ENCODE measurements at regions of chr17 and their contacts with region 1.

Region 1: GRCh38 chr17:43945074-43945829 is 3.0 kb upstream of the PPY start:
- DNase-seq: no peak
- ATAC-seq: no peak
- H3K4me3 ChIP-seq: no peak overlapping the region
- H3K4me3 Mint-ChIP-seq: no peak overlapping the region
- H3K27ac ChIP-seq: no peak overlapping the region
- H3K27ac Mint-ChIP-seq: no peak overlapping the region
- H3K4me1 ChIP-seq: no peaks in the 10 kb centered on the region
- H3K4me1 Mint-ChIP-seq: no peaks in the 10 kb centered on the region
- H3K27me3 ChIP-seq: peaks cover 0 to 22% of the 10 kb centered on the region in 2 experiments
- H3K27me3 Mint-ChIP-seq: peaks cover 4 to 21% of the 10 kb centered on the region in 2 donors

Region 2: DNA sequence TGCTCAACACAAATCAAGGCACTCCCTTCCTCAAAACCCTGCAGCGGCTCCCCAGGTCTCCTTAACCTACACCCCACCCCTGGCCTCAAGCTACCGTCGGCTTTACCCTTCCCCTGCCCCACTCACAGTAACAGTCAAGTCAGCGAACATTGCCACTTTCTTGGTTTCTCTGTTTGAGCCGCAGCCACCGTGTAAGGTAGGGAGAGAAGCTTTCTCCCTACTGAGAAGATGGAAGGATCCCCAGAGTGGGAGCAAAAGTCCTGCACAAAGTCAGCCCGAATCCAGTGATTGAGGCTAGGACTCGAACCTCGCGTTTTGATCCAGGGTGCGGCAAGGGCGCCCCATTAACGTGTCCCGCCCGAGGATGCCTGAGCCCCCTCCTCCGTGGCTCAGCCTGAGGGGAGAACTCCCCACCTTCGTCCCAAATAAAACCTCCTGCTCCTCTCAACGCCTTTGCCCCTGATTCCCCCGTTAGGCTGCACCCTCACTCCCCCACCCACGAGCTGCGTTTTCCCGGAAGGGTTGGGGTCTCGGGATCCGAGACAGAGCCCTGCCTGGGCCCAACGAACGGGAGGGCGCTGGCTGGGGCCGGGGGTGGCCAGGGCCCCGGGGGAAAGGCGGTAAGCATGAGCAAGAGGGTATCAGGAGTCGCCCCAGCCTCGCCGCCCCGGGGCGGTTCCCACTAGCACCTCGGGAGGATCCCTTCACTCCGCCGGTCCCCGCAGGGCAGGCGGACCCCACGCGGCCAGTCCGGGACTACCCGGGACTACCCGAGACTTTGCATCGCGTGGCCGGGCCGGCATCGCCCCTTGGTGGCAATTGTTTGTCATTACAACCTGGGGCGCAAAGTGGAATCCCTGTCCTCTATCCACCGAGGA is 49.3 kb after region 1 on chr17:
- CTCF ChIA-PET with region 1: interaction called in 1 of 2 experiments, 11 read pairs
- POLR2A ChIA-PET with region 1: no interaction called
- DNase-seq: peak; percentile 22 to 78 (median 55)
- ATAC-seq: peak; percentile 52 to 94 (median 89)
- H3K4me3 ChIP-seq: peak overlapping the region in 1 of 2 donors; percentile 26
- H3K4me3 Mint-ChIP-seq: peak overlapping the region in 1 of 3 donors; percentile 13
- H3K27ac ChIP-seq: no peak overlapping the region
- H3K27ac Mint-ChIP-seq: no peak overlapping the region
- H3K4me1 ChIP-seq: peaks cover 0 to 9% of the 10 kb centered on the region in 2 experiments
- H3K4me1 Mint-ChIP-seq: peaks cover 0 to 8% (median 0%) of the 10 kb centered on the region in 3 donors
- H3K27me3 ChIP-seq: peaks cover 0 to 48% of the 10 kb centered on the region in 2 experiments
- H3K27me3 Mint-ChIP-seq: peaks cover 7 to 19% of the 10 kb centered on the region in 2 donors

Region 3: GRCh38 chr17:44044067-44044466 is 98.8 kb after region 1 on chr17:
- CTCF ChIA-PET with region 1: interaction called, 7 to 34 read pairs
- POLR2A ChIA-PET with region 1: no interaction called
- DNase-seq: no peak
- ATAC-seq: no peak
- H3K4me3 ChIP-seq: no peak overlapping the region
- H3K4me3 Mint-ChIP-seq: no peak overlapping the region
- H3K27ac ChIP-seq: no peak overlapping the region
- H3K27ac Mint-ChIP-seq: no peak overlapping the region
- H3K4me1 ChIP-seq: no peaks in the 10 kb centered on the region
- H3K4me1 Mint-ChIP-seq: peaks cover 8 to 18% (median 18%) of the 10 kb centered on the region in 3 donors
- H3K27me3 ChIP-seq: no peaks in the 10 kb centered on the region
- H3K27me3 Mint-ChIP-seq: no peaks in the 10 kb centered on the region

Measured in T-cell (primary cell).